Dorsolateral prefrontal cortex (tissue), 120 donors: ENCODE measurements at regions of chr11 and their contacts with region 1.

Region 1: DNA sequence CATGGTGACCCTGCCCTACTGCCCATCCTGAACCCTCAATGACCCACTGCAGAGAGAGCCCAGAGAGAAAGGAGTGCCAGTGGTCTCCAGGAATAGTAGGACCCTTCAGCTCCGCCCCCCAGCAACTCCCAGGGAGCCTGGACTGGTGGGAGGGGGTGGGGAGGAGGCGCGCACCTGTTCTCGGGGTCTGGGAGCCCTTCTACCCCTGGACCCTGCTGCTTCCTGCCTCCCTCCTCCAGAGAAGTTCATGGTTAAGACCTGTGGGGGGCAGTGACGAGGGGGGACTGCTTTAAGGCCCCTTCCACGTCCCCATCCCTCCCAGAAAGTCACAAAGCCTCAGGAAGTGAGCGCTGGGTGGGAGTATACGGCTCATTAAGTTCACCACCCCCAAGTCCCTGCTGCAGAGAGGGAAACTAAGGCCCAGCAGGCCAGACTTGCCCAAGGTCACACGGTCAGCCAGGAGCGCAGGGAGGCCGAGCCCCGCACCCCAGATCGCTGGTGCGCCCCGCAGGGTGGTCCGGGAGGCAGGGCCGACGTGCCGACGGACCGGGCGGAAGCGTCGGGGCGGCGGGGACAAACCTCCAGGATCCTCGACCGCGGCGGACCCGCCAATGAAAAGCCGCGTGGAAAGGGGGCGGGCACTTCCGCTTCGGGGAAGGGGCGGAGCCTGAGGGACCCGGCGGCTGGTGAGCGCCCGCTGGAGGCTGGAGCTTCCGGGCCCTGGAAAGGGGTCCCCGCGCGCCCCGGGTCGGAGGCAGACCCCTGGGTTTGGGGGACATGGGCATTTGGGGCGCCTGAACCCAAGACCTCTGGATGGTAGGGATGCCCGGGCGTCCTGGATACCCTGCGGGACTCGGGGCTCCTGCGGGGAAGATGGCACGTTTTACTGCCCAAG is at the starts of genes NUDT22 and TRPT1:
- DNase-seq: peak; percentile 81 to 94 (median 90)
- H3K4me3 ChIP-seq: peak within 1 kb of the TSS; percentile 63 to 100 (median 89)
- H3K27ac ChIP-seq: peak within 1 kb of the TSS; percentile 49 to 98 (median 91)
- H3K27me3 ChIP-seq: no peaks in the 10 kb centered on the region
- CTCF ChIP-seq: peak in 51 of 56 donors; percentile 5 to 72 (median 50)
- total RNA-seq, gene NUDT22: 29.9 to 74.4 (median 43.4) TPM
- total RNA-seq, gene TRPT1: 14.9 to 41.9 (median 27.8) TPM

Region 2: GRCh38 chr11:63986156-63986931 is 239.5 kb before region 1 on chr11 and contains the start of gene OTUB1:
- intact Hi-C with region 1: no loop called
- DNase-seq: peak; percentile 82 to 94 (median 90)
- H3K4me3 ChIP-seq: peak within 1 kb of the TSS; percentile 66 to 100 (median 96)
- H3K27ac ChIP-seq: peak within 1 kb of the TSS; percentile 11 to 97 (median 88)
- H3K27me3 ChIP-seq: no peaks in the 10 kb centered on the region
- CTCF ChIP-seq: peak in 38 of 56 donors; percentile 6 to 47 (median 26)
- total RNA-seq, gene OTUB1: 68.7 to 167 (median 128) TPM

Region 3: GRCh38 chr11:64185816-64186498 is 39.9 kb before region 1 on chr11 and contains the start of gene STIP1:
- intact Hi-C with region 1: loop called in 1 of 2 experiments (anchors 5 kb)
- DNase-seq: peak in 9 of 10 donors; percentile 95 to 99 (median 99)
- H3K4me3 ChIP-seq: peak within 1 kb of the TSS in 46 of 59 donors; percentile 45 to 92 (median 76)
- H3K27ac ChIP-seq: peak within 1 kb of the TSS in 39 of 59 donors; percentile 95 to 100 (median 100)
- H3K27me3 ChIP-seq: no peaks in the 10 kb centered on the region
- CTCF ChIP-seq: peak in 2 of 56 donors; percentile 7 to 15
- total RNA-seq, gene STIP1: 90.1 to 461 (median 151) TPM